BJ (cell line): ENCODE measurements at regions of chr1 and their contacts with region 1.

Region 1: DNA sequence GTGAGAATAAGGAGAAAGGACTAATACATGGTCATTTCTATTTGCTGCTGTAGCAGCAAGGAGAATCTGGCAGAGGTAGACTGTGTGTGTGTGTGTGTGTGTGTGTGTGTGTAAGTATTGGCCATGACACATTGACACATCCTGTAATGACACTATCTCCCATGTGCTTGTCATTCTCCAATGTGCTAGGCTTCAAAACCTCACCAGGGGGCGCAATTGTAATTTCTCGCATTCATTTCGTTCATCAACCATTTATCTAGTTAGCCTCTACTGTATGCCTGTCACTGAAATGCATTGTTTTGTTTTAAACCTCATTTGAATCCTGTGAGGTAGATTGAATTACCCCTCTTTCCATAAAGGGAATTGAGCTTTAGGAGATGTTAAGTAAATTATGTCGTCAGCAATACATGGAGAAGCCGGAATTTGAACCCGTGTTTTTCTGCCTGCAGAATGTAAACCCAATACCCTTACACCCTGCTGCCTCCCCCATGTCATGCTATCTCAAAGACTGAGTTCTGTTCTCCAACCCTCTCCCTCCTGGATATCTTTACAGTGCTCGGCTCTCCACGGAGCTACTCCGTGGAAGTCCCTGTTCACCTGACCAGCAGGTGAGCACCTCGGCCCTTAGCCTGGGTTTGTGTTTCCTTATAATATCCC is 100.8 kb downstream of the UCK2 start:
- DNase-seq: no peak
- H3K4me3 ChIP-seq: no peak overlapping the region
- H3K27me3 ChIP-seq: no peaks in the 10 kb centered on the region
- CTCF ChIP-seq: peak; percentile 76

Region 2: DNA sequence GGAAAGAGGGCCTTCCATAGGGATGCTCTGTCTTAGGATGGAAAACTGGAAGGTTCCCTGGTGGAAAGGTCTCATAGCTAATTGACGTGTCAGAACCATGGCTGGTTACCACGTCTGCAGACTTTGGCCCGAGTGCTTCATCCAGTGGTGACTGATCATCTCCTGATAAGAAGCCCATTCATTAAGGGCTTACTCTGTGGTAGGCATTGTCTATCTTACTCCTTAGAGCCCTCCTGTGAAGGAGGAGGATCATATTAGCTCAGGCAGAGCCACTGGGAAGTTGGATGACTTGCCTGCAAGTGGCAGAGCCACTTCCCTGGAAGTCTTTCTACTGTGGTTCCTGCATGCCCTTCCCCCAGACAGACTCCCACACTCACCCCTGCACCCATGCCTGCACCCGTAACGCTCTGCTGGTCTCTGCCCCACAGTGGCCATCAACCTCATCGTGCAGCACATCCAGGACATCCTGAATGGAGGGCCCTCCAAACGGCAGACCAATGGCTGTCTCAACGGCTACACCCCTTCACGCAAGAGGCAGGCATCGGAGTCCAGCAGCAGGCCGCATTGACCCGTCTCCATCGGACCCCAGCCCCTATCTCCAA is 20.8 kb before region 1 on chr1:
- CTCF ChIA-PET with region 1: no interaction called
- POLR2A ChIA-PET with region 1: no interaction called
- DNase-seq: no peak
- H3K4me3 ChIP-seq: no peak overlapping the region
- H3K27me3 ChIP-seq: no peaks in the 10 kb centered on the region
- CTCF ChIP-seq: no peak

Region 3: GRCh38 chr1:165942062-165942461 is 13.9 kb after region 1 on chr1:
- CTCF ChIA-PET with region 1: interaction called, 11 read pairs
- POLR2A ChIA-PET with region 1: no interaction called
- DNase-seq: no peak
- H3K4me3 ChIP-seq: no peak overlapping the region
- H3K27me3 ChIP-seq: no peaks in the 10 kb centered on the region
- CTCF ChIP-seq: no peak

Region 4: GRCh38 chr1:166479052-166479631 is 550.9 kb after region 1 on chr1:
- CTCF ChIA-PET with region 1: interaction called, 103 read pairs
- POLR2A ChIA-PET with region 1: no interaction called
- DNase-seq: no peak
- H3K4me3 ChIP-seq: no peak overlapping the region
- H3K27me3 ChIP-seq: no peaks in the 10 kb centered on the region
- CTCF ChIP-seq: peak; percentile 75